CD4-positive, alpha-beta T cell (primary cell): ENCODE measurements at regions of chr5 and their contacts with region 1.

Region 1: DNA sequence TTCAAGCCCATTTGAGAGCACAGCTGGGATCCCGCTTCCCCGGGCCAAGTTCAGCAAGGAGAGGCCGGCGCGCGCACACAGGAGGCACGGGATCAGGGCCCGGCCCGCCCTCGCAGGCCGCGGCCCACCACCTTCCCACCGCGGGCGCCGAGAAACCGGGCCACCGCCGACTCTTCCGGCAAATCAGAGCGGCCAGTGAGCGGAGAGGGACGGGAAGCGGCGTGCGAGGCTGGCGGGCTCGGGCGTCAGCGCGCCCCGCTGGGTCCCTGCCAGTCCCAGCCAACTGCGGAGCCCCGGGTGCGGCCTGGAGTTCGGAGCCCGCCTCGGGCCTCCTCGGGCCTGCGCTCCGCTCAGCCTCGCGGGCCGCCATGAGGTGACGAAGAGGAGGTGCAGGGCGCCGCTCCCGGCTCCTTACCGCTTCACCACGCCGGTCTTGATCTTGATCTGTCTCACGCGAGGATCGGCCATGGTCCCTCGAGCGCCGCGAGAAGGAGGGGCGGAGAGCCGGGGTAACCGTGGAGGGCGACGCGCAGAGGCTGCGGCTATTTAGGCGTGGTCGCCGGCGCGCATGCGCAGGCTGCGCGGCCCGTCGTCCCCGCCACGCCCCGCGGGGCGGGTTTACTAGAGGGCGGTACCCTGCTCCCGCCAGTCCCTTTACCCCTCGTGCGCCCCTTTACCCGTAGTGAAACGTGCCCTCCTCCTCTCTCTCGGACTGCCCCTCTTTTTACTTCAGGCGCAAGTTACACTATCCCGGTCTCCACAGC is at the start of gene TBCA:
- DNase-seq: peak; percentile 78 to 98 (median 89)
- ATAC-seq: peak; percentile 82
- H3K4me3 ChIP-seq: peak within 1 kb of the TSS; percentile 79
- H3K4me3 Mint-ChIP-seq: peak within 1 kb of the TSS; percentile 94
- H3K27ac ChIP-seq: peak within 1 kb of the TSS; percentile 89 to 92
- H3K27ac Mint-ChIP-seq: peak within 1 kb of the TSS; percentile 95
- H3K4me1 ChIP-seq: peaks cover 34% of the 10 kb centered on the region
- H3K4me1 Mint-ChIP-seq: peaks cover 53% of the 10 kb centered on the region
- H3K27me3 ChIP-seq: no peaks in the 10 kb centered on the region
- H3K27me3 Mint-ChIP-seq: no peaks in the 10 kb centered on the region
- CTCF ChIP-seq: peak; percentile 34
- total RNA-seq, gene TBCA: 72.0 to 72.9 TPM

Region 2: GRCh38 chr5:77491783-77492652 is 284.0 kb before region 1 on chr5 and contains the start of gene WDR41:
- CTCF ChIA-PET with region 1: no interaction called
- POLR2A ChIA-PET with region 1: interaction called, 3 read pairs
- intact Hi-C with region 1: loop called in 1 of 2 experiments (anchors 5 kb)
- DNase-seq: peak; percentile 66 to 94 (median 82)
- ATAC-seq: peak; percentile 92
- H3K4me3 ChIP-seq: peak within 1 kb of the TSS; percentile 95
- H3K4me3 Mint-ChIP-seq: peak within 1 kb of the TSS; percentile 96
- H3K27ac ChIP-seq: peak within 1 kb of the TSS; percentile 70 to 72
- H3K27ac Mint-ChIP-seq: peak within 1 kb of the TSS; percentile 69
- H3K4me1 ChIP-seq: peaks cover 11% of the 10 kb centered on the region
- H3K4me1 Mint-ChIP-seq: peaks cover 24% of the 10 kb centered on the region
- H3K27me3 ChIP-seq: no peaks in the 10 kb centered on the region
- H3K27me3 Mint-ChIP-seq: peaks cover 33% of the 10 kb centered on the region
- CTCF ChIP-seq: peak; percentile 91
- total RNA-seq, gene WDR41: 4.2 to 4.4 TPM

Region 3: GRCh38 chr5:77645158-77645994 is 130.6 kb before region 1 on chr5:
- CTCF ChIA-PET with region 1: no interaction called
- POLR2A ChIA-PET with region 1: no interaction called
- intact Hi-C with region 1: loop called in 1 of 2 experiments (anchors 5 kb)
- DNase-seq: peak in 5 of 14 experiments; percentile 24 to 71 (median 44)
- ATAC-seq: peak; percentile 68
- H3K4me3 ChIP-seq: peak overlapping the region; percentile 34
- H3K4me3 Mint-ChIP-seq: peak overlapping the region; percentile 71
- H3K27ac ChIP-seq: no peak overlapping the region
- H3K27ac Mint-ChIP-seq: no peak overlapping the region
- H3K4me1 ChIP-seq: peaks cover 21% of the 10 kb centered on the region
- H3K4me1 Mint-ChIP-seq: peaks cover 25% of the 10 kb centered on the region
- H3K27me3 ChIP-seq: peaks cover 66 to 78% of the 10 kb centered on the region in 2 experiments
- H3K27me3 Mint-ChIP-seq: peaks cover 97% of the 10 kb centered on the region
- CTCF ChIP-seq: no peak

Region 4: DNA sequence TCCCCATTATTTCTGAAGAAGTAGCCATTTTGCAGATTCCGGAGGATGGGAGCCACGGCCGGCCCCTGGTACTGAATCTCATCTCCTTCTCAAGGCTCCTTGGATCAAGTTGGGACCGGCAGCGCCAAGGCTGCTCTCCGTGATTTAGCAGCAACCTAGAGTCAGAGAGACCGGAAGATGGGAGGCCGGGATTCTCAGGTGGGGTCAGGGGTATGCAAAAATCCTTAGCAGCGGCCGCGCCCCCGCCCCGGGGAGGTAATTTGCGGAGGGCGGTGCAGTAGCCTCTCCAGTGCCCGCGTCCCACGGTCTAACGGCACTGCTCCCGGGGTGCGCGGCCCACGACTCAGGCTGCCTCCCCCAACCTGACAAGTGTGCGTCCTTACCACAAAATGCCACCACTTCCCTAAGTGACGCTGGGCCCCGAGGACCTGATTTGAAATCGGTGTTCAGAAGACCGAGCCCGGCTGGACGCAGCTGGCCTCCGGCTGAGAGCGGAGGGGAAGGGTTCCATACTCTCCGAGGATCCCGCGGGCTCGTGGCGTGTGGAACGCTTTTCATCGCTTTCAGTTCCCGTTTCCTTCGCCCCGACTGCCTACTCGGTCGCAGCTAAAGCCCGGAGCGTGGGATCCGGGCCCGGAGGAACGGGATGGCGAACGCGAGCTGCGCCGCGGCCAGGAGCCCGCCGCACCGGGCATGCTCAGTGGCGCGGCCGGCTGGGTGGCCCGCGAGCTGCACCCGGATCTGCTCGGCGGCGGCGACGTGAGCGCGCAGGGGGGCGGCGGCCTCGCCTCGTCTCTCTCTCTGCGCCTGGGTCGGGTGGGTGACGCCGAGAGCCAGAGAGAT is 584.1 kb after region 1 on chr5 and contains the start of gene SCAMP1:
- CTCF ChIA-PET with region 1: no interaction called
- POLR2A ChIA-PET with region 1: no interaction called
- intact Hi-C with region 1: loop called in 1 of 2 experiments (anchors 5 kb)
- DNase-seq: peak; percentile 80 to 96 (median 90)
- ATAC-seq: peak; percentile 79
- H3K4me3 ChIP-seq: peak within 1 kb of the TSS; percentile 96
- H3K4me3 Mint-ChIP-seq: peak within 1 kb of the TSS; percentile 91
- H3K27ac ChIP-seq: peak within 1 kb of the TSS; percentile 86 to 87
- H3K27ac Mint-ChIP-seq: peak within 1 kb of the TSS; percentile 83
- H3K4me1 ChIP-seq: peaks cover 23% of the 10 kb centered on the region
- H3K4me1 Mint-ChIP-seq: peaks cover 53% of the 10 kb centered on the region
- H3K27me3 ChIP-seq: no peaks in the 10 kb centered on the region
- H3K27me3 Mint-ChIP-seq: no peaks in the 10 kb centered on the region
- CTCF ChIP-seq: peak; percentile 27
- total RNA-seq, gene SCAMP1: 16.0 to 18.4 TPM

Region 5: GRCh38 chr5:79612667-79613198 is 1836.8 kb after region 1 on chr5:
- CTCF ChIA-PET with region 1: no interaction called
- POLR2A ChIA-PET with region 1: no interaction called
- intact Hi-C with region 1: loop called in 1 of 2 experiments (anchors 10 kb)
- DNase-seq: no peak
- ATAC-seq: no peak
- H3K4me3 ChIP-seq: peak overlapping the region; percentile 81
- H3K4me3 Mint-ChIP-seq: peak overlapping the region; percentile 91
- H3K27ac ChIP-seq: peak overlapping the region; percentile 76 to 90
- H3K27ac Mint-ChIP-seq: peak overlapping the region; percentile 98
- H3K4me1 ChIP-seq: peaks cover 14% of the 10 kb centered on the region
- H3K4me1 Mint-ChIP-seq: peaks cover 42% of the 10 kb centered on the region
- H3K27me3 ChIP-seq: no peaks in the 10 kb centered on the region
- H3K27me3 Mint-ChIP-seq: no peaks in the 10 kb centered on the region
- CTCF ChIP-seq: no peak